Aorta (tissue), 5 donors: ENCODE measurements at regions of chr20 and their contacts with region 1.

Region 1: DNA sequence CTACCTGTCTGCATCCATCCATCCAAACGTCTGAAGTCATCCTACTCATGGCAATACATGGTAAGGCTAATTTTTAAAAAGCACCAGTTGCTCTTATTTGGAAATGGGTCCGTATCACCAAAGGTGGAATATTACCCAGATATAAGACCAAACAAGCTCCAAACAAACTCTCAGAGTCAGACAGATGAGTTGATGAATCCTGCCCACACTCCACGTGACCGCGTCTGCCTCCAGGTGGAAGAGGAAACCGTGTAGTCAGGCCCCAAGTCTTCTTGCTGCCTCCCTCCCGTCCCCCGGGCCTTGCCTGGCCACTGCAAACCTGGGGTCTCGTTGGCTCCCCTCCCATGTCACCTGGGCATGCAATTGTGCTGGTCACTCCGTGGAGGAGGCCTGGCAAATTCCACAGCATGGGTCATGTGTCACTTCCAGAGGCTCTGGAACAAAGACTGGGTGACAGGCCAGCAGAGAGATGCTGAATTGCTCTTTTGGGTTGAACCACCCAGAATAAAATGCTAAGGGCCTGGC is 31.8 kb downstream of the CTCFL start:
- DNase-seq: no peak
- ATAC-seq: no peak
- H3K4me3 ChIP-seq: no peak overlapping the region
- H3K27ac ChIP-seq: no peak overlapping the region
- H3K4me1 ChIP-seq: peaks cover 0 to 1% of the 10 kb centered on the region in 2 donors
- H3K27me3 ChIP-seq: no peaks in the 10 kb centered on the region

Region 2: DNA sequence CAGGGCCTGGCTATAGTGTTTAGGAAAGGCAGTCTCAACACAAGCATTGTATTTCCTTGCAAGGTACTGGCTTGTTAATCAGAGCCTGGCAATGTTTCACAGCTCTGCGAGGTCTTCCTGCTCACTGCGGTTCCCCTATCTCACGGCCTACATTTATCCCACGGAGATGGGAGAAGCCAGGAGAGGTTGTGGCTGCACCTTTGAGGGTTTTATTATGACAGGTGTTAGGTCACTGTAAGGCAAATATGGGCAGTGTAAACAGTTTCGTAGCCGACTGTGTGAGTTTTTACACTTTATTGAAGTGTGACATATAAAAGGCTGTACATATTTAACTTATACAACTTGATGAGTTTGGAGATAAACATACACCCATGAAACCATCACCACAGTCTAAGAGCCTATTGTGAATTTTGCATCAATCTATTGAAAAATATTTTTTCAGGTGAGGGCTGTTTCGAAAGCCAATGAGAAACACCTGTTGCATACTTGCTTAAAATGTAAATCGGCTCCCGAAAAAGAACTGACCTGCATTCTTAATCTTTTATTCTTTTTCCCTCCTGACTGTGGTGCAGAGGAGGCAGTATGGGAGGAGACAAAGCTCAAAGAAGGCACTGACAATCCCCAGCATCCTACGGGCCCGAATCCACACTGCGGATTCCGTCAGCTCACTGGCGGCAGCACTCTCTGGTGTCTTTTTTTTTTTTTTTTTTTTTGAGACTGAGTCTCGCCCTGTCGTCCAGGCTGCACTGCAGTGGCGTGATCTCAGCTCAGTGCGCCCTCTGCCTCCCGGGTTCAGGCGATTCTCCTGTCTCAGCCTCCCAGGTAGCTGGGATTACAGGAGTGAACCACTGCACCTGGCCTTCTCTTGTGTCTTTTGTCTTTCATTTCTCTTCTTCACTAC is 109.5 kb before region 1 on chr20:
- intact Hi-C with region 1: loop called (anchors 2 kb)
- DNase-seq: no peak
- ATAC-seq: no peak
- H3K4me3 ChIP-seq: no peak overlapping the region
- H3K27ac ChIP-seq: no peak overlapping the region
- H3K4me1 ChIP-seq: no peaks in the 10 kb centered on the region
- H3K27me3 ChIP-seq: no peaks in the 10 kb centered on the region

Region 3: DNA sequence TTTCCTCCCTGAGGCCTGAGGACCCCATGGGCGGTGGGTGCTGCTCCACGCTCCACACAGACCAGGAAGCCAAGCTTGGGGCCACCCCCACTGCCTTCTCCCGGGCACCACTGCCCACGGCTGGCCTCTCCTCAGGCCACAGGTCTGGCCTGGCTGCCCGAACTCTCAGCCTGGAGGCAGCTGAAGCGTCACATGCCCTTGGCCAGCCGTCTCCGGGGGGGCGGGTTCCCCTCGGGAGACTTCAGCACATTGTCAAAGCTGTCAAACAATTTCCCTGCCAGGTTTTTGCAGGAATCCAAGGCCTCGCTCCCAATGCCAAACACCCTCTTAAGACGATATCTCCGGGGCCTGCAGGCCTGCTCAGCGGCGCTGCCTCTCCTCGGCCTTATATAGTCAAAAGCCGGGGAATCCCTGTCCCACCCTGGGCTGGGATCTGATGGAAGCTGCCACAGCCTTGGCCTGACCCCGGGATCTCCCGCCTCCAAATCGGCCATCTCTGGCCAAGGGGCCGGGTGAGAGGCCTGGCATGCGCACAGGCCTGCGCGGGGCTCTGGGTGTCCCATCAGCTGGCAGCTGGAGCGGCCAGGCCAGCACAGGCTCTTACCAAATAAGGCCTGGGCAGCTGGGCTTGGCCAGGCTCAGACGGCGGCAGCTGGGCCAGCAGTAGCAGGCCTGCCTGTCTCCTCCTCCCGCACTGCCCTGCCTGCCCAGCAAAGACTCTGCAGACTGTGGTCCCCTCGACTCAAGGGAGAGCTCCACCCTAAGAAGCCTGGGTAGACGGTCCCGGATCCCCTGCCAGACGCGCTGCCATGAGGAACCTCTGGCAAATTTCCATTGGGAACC is 52.3 kb before region 1 on chr20:
- intact Hi-C with region 1: loop called in 1 of 2 experiments (anchors 2 kb)
- DNase-seq: peak; percentile 94
- ATAC-seq: peak; percentile 91
- H3K4me3 ChIP-seq: no peak overlapping the region
- H3K27ac ChIP-seq: peak overlapping the region; percentile 64 to 95
- H3K4me1 ChIP-seq: peaks cover 0 to 3% of the 10 kb centered on the region in 2 donors
- H3K27me3 ChIP-seq: no peaks in the 10 kb centered on the region

Region 4: GRCh38 chr20:57450419-57450818 is 42.7 kb before region 1 on chr20:
- intact Hi-C with region 1: loop called in 1 of 2 experiments (anchors 5 kb)
- DNase-seq: peak in 1 of 2 donors; percentile 87
- ATAC-seq: peak; percentile 73
- H3K4me3 ChIP-seq: no peak overlapping the region
- H3K27ac ChIP-seq: no peak overlapping the region
- H3K4me1 ChIP-seq: no peaks in the 10 kb centered on the region
- H3K27me3 ChIP-seq: no peaks in the 10 kb centered on the region